ENCODE measurements at regions of chr10 and their contacts with region 1.

Region 1: DNA sequence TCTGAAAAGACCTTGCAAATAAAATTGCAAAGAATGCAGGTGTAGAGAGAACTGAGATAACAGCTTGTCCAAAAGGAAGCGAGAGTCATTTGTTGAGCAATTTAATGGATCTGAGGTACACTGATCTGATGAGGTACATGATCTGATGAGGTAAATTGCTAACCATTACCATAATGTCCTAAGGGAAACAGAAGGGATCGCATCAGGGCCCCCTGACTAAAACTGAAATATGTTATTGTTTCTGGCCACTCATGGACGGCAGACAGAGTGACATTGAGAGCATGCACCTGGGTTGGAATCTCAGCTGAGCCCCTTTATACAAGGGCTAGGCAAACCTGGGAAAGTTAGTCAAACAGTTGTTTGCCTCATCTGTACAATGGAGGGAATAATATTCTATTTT is 15.8 kb upstream of the PAPSS2 start:
- DNase-seq: no peak
- H3K4me3 Mint-ChIP-seq: no peak overlapping the region
- H3K27ac Mint-ChIP-seq: no peak overlapping the region
- H3K4me1 Mint-ChIP-seq: peaks cover 5% of the 10 kb centered on the region
- H3K27me3 Mint-ChIP-seq: no peaks in the 10 kb centered on the region

Region 2: DNA sequence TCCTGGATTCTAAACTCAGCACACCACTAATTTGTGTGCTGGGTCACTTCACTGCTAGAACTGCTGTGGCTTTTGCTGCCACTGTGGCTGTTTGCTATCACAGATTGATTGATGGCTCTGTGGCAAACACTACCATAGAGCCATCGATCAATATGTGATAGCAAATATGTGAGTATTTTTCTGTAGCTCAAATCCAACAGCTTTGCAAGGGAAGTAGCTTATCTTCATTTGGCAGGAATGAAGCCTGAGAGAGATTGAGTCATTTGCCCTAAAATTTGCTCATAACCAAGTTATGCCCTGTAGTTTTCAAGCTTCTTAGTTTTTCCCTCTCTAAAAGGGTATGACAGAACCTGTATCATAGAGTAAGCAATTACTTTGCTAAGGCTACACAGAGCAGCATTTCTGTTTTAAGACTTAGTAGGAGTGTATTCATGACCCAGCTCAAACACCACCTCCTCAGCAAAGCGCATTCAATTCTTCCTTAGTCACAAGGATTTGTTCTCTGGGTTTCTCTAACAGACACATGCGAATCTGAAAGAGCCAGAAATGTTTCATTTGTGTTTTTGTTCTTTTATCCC is 96.1 kb before region 1 on chr10:
- intact Hi-C with region 1: no loop called
- DNase-seq: no peak
- H3K4me3 Mint-ChIP-seq: no peak overlapping the region
- H3K27ac Mint-ChIP-seq: no peak overlapping the region
- H3K4me1 Mint-ChIP-seq: peaks cover 7% of the 10 kb centered on the region
- H3K27me3 Mint-ChIP-seq: peaks cover 2% of the 10 kb centered on the region

Region 3: DNA sequence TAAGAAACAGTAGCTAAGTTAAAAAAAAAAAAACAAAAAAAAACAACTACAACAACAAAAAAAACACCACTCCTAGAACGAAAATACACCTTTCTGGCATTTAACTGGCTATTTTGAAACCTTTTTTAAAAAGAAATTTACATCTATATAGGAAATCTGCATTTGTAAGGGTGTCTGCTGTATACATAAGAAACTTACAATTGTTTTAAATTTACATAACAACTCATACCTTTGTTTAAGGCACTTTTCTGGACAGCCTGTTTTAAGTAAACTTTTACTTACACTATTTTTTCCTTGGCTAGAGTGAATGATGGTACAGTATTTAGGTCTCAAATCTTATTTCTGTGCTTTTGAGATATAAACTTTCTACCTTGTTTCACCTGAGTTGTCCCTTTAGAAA is 18.3 kb before region 1 on chr10:
- intact Hi-C with region 1: loop called (anchors 1 kb)
- DNase-seq: no peak
- H3K4me3 Mint-ChIP-seq: no peak overlapping the region
- H3K27ac Mint-ChIP-seq: no peak overlapping the region
- H3K4me1 Mint-ChIP-seq: no peaks in the 10 kb centered on the region
- H3K27me3 Mint-ChIP-seq: peaks cover 20% of the 10 kb centered on the region

Measured in activated CD4-positive, alpha-beta T cell treated with anti-CD3 and anti-CD28 coated beads, Interleukin-2, amount 10 ng/mL, durations not matched to agents 24 days and 14 days (primary cell).